Activated CD4-positive, alpha-beta T cell treated with anti-CD3 and anti-CD28 coated beads, Interleukin-2, amount 10 ng/mL, durations not matched to agents 24 days and 14 days (primary cell): ENCODE measurements at regions of chr2 and their contacts with region 1.

Region 1: DNA sequence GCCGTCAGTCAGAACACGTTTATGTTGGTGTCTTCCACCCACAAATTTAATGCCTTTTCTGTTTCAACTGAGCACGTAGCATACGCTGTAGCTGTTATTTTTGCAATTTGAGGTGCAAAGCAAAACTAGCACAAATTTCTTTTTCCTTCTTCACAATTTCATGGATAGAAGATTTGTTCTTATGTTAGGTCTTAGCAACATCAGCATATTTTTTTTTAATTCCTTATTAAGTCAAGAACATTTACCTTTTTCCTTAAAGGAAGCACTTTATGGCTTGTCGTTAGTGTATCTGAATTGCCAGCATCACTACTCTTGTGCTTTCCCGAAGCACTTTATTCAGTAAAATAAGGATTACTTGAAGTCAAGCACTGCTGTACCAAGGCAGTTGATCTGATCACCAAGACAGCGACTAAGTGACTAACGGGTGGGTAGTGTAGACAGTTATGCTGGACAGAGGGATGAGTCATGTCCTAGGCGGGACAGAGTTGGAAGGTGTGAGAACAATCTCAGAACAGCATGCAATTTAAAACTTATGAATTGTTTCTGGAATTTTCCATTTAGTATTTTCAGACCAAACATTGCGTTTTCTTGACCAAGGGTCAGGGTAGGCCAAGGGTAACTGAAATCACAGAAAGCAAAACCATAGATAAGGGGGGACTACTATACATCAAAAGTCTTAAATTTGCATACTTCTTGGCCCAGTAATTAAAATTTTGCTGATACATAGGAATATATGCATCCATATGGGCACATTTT is 13.3 kb downstream of the BABAM2 start:
- DNase-seq: no peak
- H3K4me3 Mint-ChIP-seq: no peak overlapping the region
- H3K27ac Mint-ChIP-seq: no peak overlapping the region
- H3K4me1 Mint-ChIP-seq: peaks cover 51% of the 10 kb centered on the region
- H3K27me3 Mint-ChIP-seq: no peaks in the 10 kb centered on the region

Region 2: GRCh38 chr2:27857417-27858172 is 46.2 kb before region 1 on chr2:
- intact Hi-C with region 1: loop called (anchors 2 kb)
- DNase-seq: no peak
- H3K4me3 Mint-ChIP-seq: no peak overlapping the region
- H3K27ac Mint-ChIP-seq: peak overlapping the region; percentile 77
- H3K4me1 Mint-ChIP-seq: peaks cover 22% of the 10 kb centered on the region
- H3K27me3 Mint-ChIP-seq: no peaks in the 10 kb centered on the region

Region 3: DNA sequence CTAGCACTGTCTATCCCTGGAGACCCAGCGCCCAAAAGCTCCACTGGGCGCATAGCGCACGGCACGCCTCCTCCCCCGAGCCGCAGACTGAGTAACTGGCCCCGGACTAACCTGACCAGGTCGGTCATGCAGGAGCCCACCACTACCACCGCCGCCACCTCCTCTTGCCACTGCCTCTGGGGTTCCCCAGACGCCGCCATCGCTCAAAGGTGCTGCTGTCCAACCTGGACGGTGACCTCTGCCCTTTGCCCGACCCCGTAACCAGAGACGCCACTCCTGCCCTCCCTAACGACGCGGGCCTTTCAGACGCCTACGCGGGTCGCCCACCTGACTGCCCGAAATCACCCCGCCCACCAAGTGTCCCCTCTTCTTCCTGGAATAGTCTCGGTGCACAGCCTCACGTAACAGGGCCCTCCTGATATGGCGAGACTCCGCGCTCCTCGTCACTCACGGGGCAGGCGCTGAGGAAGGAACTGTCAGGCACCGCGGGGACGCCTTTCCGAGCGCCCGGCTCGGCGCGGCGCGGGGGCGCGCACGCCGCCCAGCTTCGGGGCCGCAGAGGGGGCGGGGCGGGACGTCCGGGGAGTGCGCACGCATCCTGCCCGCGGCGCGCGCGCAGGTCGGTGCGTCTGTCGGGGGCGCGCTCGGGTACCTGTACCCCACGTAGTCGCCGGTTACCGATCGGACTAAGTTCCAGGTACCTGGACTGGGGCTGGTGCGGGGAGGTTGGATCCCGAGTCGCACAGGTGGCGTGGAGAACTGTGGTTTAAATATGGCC is 13.5 kb before region 1 on chr2 and contains the starts of genes BABAM2 and RBKS:
- intact Hi-C with region 1: loop called (anchors 1 kb)
- DNase-seq: peak; percentile 97
- H3K4me3 Mint-ChIP-seq: peak within 1 kb of the TSS; percentile 100
- H3K27ac Mint-ChIP-seq: peak within 1 kb of the TSS; percentile 100
- H3K4me1 Mint-ChIP-seq: peaks cover 57% of the 10 kb centered on the region
- H3K27me3 Mint-ChIP-seq: peaks cover 2% of the 10 kb centered on the region
- total RNA-seq, gene BABAM2: 45.9 and 46.7 TPM in 2 replicates
- total RNA-seq, gene RBKS: 1.3 and 1.4 TPM in 2 replicates

Region 4: GRCh38 chr2:27954771-27955383 is 51.0 kb after region 1 on chr2:
- intact Hi-C with region 1: loop called (anchors 2 kb)
- DNase-seq: peak; percentile 76
- H3K4me3 Mint-ChIP-seq: peak overlapping the region; percentile 66
- H3K27ac Mint-ChIP-seq: peak overlapping the region; percentile 86
- H3K4me1 Mint-ChIP-seq: peaks cover 67% of the 10 kb centered on the region
- H3K27me3 Mint-ChIP-seq: no peaks in the 10 kb centered on the region

Region 5: DNA sequence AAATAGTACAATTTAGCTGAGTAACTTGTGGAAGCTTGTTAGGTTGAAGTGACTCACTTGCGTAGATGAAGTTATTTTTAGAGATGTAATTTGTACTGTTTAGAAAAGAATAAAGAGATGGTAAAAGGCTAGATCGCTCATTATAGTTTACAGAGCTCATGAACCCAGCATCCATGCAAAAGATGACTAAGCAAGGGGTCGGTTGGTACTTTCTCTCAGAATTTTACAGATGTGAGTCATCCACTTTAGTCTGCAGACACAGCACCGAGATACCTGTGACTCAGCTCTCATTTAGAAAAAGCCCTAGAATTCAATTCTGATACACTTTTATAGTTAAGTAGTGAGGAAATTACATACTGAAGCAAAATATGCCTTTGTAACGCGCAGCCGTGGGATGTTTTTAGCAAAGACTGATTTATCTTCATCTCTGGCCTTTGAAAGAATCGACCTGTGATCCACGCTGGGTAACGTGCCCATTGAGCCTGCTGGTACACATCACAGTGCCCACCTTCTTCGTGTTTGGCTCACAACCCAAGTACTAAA is 372.3 kb after region 1 on chr2:
- intact Hi-C with region 1: loop called (anchors 10 kb)
- DNase-seq: peak; percentile 66
- H3K4me3 Mint-ChIP-seq: no peak overlapping the region
- H3K27ac Mint-ChIP-seq: no peak overlapping the region
- H3K4me1 Mint-ChIP-seq: peaks cover 37% of the 10 kb centered on the region
- H3K27me3 Mint-ChIP-seq: no peaks in the 10 kb centered on the region